Caco-2 (cell line): ENCODE measurements at regions of chr21 and their contacts with region 1.

Region 1: DNA sequence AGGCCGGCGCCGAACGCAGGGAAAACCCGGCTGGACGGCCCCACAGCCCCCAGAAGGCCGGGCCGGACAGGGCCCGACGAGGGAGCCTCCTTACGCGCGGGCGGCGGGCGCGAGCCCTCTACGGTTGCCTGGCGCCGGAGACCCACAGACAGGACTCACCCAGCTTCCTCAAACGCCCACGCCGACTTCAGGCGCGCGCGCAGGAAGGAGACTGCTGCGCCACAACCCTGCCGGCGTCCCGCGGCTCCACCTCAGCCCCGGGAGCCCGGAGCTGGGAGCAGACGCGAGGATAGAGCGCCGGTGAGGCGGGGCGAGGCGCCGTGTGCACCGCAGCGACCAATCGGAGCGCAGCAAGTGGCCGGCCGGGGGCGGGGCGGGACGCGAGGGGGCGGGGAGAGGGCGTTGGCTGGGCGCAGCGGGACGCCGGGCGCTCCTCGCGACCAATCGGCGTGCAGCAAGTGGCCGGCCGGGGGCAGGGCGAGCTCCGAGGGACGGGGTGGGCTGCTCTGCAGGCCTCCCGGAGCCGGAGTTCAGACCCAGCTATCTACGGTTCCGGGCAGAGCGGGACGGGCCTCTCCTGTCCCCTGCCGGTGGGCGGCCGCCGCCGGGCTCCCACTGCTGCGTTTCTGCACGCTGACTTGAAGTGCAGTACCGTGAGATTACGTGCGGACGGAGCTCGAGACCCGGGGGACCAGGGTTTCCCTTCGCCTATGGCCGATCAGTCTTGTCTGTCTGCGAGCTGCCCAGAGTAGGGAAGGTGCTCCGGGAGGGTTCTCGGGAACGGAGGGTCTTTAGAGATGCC is at the start of gene TMEM50B:
- DNase-seq: peak; percentile 97
- H3K4me3 ChIP-seq: peak within 1 kb of the TSS; percentile 91
- H3K4me3 Mint-ChIP-seq: peak within 1 kb of the TSS; percentile 91
- H3K27ac Mint-ChIP-seq: peak within 1 kb of the TSS; percentile 89
- H3K4me1 ChIP-seq: peaks cover 6% of the 10 kb centered on the region; the same call in 1 of the 2 replicates
- H3K4me1 Mint-ChIP-seq: peaks cover 4% of the 10 kb centered on the region
- H3K27me3 ChIP-seq: no peaks in the 10 kb centered on the region
- H3K27me3 Mint-ChIP-seq: no peaks in the 10 kb centered on the region
- CTCF ChIP-seq: peak; percentile 35 to 82
- total RNA-seq, gene TMEM50B: 21.0 and 25.9 TPM in 2 replicates

Region 2: DNA sequence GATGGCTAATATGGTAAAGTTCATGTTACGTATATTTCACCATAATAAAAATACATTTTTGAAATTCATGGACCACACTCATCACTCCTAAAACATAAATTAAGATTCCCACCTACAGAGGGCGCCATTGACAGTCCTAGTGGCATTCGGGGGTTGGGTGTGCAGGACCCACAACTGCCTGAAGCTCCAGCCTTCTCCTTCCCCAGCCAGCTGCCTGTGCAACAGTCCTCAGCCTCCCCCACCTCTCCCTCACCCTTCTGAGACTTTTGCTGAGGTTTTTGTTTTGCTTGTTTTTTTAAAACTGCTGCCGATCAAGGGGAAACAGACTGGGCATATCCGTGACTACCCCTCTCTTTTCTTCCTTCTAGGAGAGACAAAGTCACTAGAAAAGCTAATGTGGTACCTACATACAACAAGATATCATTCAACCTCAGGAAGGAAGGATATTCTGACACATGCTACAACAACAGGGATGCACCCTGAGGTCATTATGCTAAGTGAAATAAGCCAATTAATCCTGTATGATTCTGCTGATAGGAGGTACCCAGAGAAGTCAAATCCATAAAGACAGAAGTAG is 1076.6 kb before region 1 on chr21:
- CTCF ChIA-PET with region 1: no interaction called
- POLR2A ChIA-PET with region 1: no interaction called
- intact Hi-C with region 1: no loop called
- DNase-seq: peak; percentile 53 to 74
- H3K4me3 ChIP-seq: no peak overlapping the region
- H3K4me3 Mint-ChIP-seq: no peak overlapping the region
- H3K27ac Mint-ChIP-seq: no peak overlapping the region
- H3K4me1 ChIP-seq: no peaks in the 10 kb centered on the region
- H3K4me1 Mint-ChIP-seq: no peaks in the 10 kb centered on the region
- H3K27me3 ChIP-seq: no peaks in the 10 kb centered on the region; the same call in 1 of the 2 replicates
- H3K27me3 Mint-ChIP-seq: peaks cover 6% of the 10 kb centered on the region
- CTCF ChIP-seq: peak; percentile 66 to 69

Region 3: DNA sequence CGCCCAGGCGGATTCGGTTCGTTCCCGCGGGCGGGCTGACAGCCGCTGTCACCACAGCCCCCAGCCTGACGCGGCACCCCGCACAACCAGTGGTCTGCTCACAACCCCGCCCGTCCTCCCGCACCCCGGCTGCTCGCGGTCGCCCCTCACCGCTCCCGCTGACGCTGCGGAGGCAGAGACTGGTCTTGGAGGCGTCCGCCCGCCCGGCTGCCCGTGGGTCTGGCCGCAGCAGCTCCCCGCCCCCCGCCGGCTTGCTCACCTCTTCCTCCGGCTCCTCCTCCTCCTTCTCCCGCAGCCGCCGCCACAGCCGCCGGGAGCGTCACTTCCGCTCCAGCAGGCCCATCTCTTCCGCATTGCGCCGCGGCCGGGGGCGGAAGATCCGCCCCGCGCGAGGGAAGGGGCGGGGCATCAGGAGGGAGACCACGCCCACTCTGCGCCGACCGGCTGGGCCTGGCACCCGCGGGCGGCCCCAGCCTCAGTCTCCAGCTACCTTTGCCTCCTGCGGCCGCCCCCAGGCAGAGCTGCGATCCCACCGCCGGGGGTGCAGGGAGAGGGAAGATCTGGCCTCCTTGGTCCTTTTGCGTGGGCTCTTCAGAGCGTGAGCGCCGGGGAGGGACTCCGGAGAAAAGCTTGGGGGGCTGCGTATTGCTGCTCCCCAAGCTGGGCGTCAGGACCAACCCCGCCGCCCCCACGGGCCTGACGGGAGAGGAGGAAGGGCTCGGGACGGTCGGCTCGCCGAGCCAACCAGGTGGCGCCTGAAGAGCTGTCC is 752.0 kb before region 1 on chr21 and contains the start of gene SYNJ1:
- CTCF ChIA-PET with region 1: no interaction called
- POLR2A ChIA-PET with region 1: no interaction called
- intact Hi-C with region 1: no loop called
- DNase-seq: peak; percentile 95
- H3K4me3 ChIP-seq: peak within 1 kb of the TSS; percentile 97
- H3K4me3 Mint-ChIP-seq: peak within 1 kb of the TSS; percentile 99
- H3K27ac Mint-ChIP-seq: peak within 1 kb of the TSS; percentile 91
- H3K4me1 ChIP-seq: peaks cover 4% of the 10 kb centered on the region; the same call in 1 of the 2 replicates
- H3K4me1 Mint-ChIP-seq: peaks cover 6% of the 10 kb centered on the region
- H3K27me3 ChIP-seq: no peaks in the 10 kb centered on the region
- H3K27me3 Mint-ChIP-seq: no peaks in the 10 kb centered on the region
- CTCF ChIP-seq: no peak
- total RNA-seq, gene SYNJ1: 8.3 and 11.5 TPM in 2 replicates

Region 4: DNA sequence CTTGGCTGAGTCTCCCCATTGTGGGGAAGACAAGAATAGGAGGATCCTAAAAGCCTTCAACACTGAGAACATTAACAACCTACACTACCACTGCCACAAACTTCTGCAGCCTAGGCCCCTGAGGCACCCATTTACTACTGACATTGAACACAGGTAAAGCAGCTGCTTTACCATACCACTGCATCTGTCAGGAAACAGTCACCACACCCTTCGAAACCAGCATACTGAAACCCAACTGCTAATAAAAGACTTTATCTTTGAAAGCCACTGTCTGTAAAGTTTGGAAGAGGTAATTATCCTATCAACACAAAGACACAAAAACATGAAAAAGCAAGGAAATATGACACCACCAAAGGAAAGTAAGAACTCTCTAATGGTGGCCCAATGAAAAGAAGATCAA is 147.7 kb before region 1 on chr21:
- CTCF ChIA-PET with region 1: no interaction called
- POLR2A ChIA-PET with region 1: no interaction called
- intact Hi-C with region 1: no loop called
- DNase-seq: no peak
- H3K4me3 ChIP-seq: no peak overlapping the region
- H3K4me3 Mint-ChIP-seq: no peak overlapping the region
- H3K27ac Mint-ChIP-seq: no peak overlapping the region
- H3K4me1 ChIP-seq: no peaks in the 10 kb centered on the region
- H3K4me1 Mint-ChIP-seq: no peaks in the 10 kb centered on the region
- H3K27me3 ChIP-seq: no peaks in the 10 kb centered on the region
- H3K27me3 Mint-ChIP-seq: no peaks in the 10 kb centered on the region
- CTCF ChIP-seq: no peak

Region 5: GRCh38 chr21:33412832-33413519 is 66.9 kb before region 1 on chr21:
- CTCF ChIA-PET with region 1: interaction called, 12 read pairs
- POLR2A ChIA-PET with region 1: interaction called, 20 read pairs
- intact Hi-C with region 1: no loop called
- DNase-seq: peak; percentile 88 to 93
- H3K4me3 ChIP-seq: no peak overlapping the region
- H3K4me3 Mint-ChIP-seq: peak overlapping the region; percentile 64
- H3K27ac Mint-ChIP-seq: peak overlapping the region; percentile 93
- H3K4me1 ChIP-seq: peaks cover 52% of the 10 kb centered on the region
- H3K4me1 Mint-ChIP-seq: peaks cover 38% of the 10 kb centered on the region
- H3K27me3 ChIP-seq: no peaks in the 10 kb centered on the region
- H3K27me3 Mint-ChIP-seq: no peaks in the 10 kb centered on the region
- CTCF ChIP-seq: no peak

Region 6: GRCh38 chr21:33451634-33452071 is 28.2 kb before region 1 on chr21:
- CTCF ChIA-PET with region 1: interaction called, 14 read pairs
- POLR2A ChIA-PET with region 1: interaction called, 4 read pairs
- intact Hi-C with region 1: no loop called
- DNase-seq: peak in 1 of 2 experiments; percentile 27
- H3K4me3 ChIP-seq: no peak overlapping the region
- H3K4me3 Mint-ChIP-seq: no peak overlapping the region
- H3K27ac Mint-ChIP-seq: peak overlapping the region; percentile 34
- H3K4me1 ChIP-seq: peaks cover 12% of the 10 kb centered on the region; the same call in 1 of the 2 replicates
- H3K4me1 Mint-ChIP-seq: peaks cover 31% of the 10 kb centered on the region
- H3K27me3 ChIP-seq: no peaks in the 10 kb centered on the region
- H3K27me3 Mint-ChIP-seq: no peaks in the 10 kb centered on the region
- CTCF ChIP-seq: no peak

Region 7: GRCh38 chr21:33514229-33514628 is 34.3 kb after region 1 on chr21:
- CTCF ChIA-PET with region 1: no interaction called
- POLR2A ChIA-PET with region 1: no interaction called
- intact Hi-C with region 1: no loop called
- DNase-seq: no peak
- H3K4me3 ChIP-seq: no peak overlapping the region
- H3K4me3 Mint-ChIP-seq: no peak overlapping the region
- H3K27ac Mint-ChIP-seq: no peak overlapping the region
- H3K4me1 ChIP-seq: no peaks in the 10 kb centered on the region
- H3K4me1 Mint-ChIP-seq: no peaks in the 10 kb centered on the region
- H3K27me3 ChIP-seq: no peaks in the 10 kb centered on the region
- H3K27me3 Mint-ChIP-seq: no peaks in the 10 kb centered on the region
- CTCF ChIP-seq: no peak

Region 8: DNA sequence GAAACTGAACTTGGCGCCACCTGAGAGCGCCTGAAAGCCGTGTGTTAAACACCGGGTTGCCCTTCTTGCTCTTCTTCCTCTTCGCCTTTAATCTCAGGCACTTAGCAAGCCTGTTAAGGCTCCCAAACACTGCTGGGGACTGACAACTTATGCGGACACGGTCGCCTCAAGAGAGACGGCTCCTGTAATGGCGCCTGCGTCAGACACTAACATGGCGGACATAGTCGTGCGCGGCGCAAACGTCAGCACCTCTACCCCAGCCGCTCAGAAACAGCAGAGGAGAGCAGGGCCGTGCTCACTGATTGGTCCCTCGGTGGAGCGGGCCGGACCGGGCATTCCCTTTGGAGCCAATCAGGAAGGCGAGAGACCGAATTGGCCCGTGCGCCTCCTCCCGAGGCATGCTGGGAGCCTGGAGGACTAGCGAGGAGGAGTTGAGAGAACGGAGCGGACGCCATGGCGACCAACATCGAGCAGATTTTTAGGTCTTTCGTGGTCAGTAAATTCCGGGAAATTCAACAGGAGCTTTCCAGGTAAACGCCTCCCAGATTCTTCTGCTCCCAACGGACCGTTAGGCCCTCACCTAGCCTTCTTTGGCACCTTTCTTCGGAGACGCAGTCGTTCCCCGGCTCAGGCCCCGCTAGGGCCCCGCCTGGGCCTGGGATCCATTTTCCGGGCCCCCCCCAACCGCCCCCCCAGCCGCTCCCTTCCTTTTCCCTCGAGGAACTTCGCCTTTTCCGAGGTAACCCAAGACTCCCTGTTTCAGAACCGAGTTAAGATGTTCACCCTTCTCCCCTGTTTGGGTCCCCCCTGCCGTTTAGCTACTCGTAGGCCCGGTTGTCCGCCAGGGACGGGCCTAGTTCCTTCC is 63.0 kb after region 1 on chr21 and contains the start of gene SON:
- CTCF ChIA-PET with region 1: interaction called, 3 read pairs
- POLR2A ChIA-PET with region 1: interaction called, 12 read pairs
- intact Hi-C with region 1: no loop called
- DNase-seq: peak; percentile 98 to 99
- H3K4me3 ChIP-seq: peak within 1 kb of the TSS; percentile 74
- H3K4me3 Mint-ChIP-seq: peak within 1 kb of the TSS; percentile 82
- H3K27ac Mint-ChIP-seq: peak within 1 kb of the TSS; percentile 98
- H3K4me1 ChIP-seq: peaks cover 19% of the 10 kb centered on the region
- H3K4me1 Mint-ChIP-seq: peaks cover 9% of the 10 kb centered on the region
- H3K27me3 ChIP-seq: no peaks in the 10 kb centered on the region
- H3K27me3 Mint-ChIP-seq: no peaks in the 10 kb centered on the region
- CTCF ChIP-seq: no peak
- total RNA-seq, gene SON: 220 and 273 TPM in 2 replicates

Region 9: DNA sequence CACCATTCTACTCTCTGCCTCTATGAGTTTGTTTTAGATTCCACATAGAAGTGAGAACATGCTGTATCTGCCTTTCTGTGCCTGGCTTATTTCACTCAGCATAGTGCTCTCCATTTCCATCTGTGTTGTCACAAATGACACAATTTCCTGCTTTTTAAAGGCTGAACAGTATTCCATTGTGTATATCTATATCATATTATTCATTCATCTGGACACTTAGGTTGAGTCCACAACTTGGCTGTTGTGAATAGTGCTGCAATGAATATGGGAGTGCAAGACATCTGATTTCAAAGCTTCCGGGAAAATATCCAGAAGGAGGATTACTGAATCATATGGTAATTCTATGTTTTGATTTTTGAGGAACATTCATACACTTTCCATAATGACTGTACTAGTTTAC is 128.7 kb after region 1 on chr21:
- CTCF ChIA-PET with region 1: interaction called, 13 read pairs
- POLR2A ChIA-PET with region 1: no interaction called
- intact Hi-C with region 1: no loop called
- DNase-seq: no peak
- H3K4me3 ChIP-seq: no peak overlapping the region
- H3K4me3 Mint-ChIP-seq: no peak overlapping the region
- H3K27ac Mint-ChIP-seq: no peak overlapping the region
- H3K4me1 ChIP-seq: no peaks in the 10 kb centered on the region
- H3K4me1 Mint-ChIP-seq: no peaks in the 10 kb centered on the region
- H3K27me3 ChIP-seq: no peaks in the 10 kb centered on the region
- H3K27me3 Mint-ChIP-seq: no peaks in the 10 kb centered on the region
- CTCF ChIP-seq: no peak